ENCODE measurements at regions of chr4 and their contacts with region 1.

Region 1: GRCh38 chr4:140237606-140237986 is 83.6 kb upstream of the MAML3 start:
- DNase-seq: peak; percentile 89
- H3K4me3 ChIP-seq: no peak overlapping the region
- H3K27ac ChIP-seq: peak overlapping the region; percentile 30
- H3K4me1 ChIP-seq: peaks cover 34% of the 10 kb centered on the region
- H3K27me3 ChIP-seq: no peaks in the 10 kb centered on the region
- CTCF ChIP-seq: no peak
- POLR2A ChIP-seq: no peak

Region 2: DNA sequence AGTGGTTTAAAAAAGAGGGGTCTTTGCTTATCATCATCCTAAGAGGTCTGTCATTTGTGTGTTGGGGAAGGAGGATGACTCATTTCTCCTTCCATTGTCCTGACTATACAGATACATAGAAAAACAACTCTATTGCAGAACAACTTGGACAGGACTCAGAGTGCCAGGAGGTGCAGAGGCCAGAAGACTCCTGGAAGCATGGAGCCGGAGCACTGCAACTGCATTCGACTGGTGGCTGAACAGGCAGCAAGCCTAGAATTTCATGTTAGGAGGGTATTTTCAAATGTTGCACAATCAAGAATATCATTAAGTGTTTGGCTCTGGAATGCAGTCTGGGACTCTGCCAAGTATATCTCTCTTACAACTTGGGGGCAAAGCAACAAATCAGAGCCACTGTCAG is 48.6 kb before region 1 on chr4:
- CTCF ChIA-PET with region 1: interaction called, 7 read pairs
- POLR2A ChIA-PET with region 1: no interaction called
- dilution Hi-C with region 1: no loop called
- intact Hi-C with region 1: loop called (anchors 2 kb)
- DNase-seq: peak; percentile 82
- H3K4me3 ChIP-seq: no peak overlapping the region
- H3K27ac ChIP-seq: no peak overlapping the region
- H3K4me1 ChIP-seq: peaks cover 18% of the 10 kb centered on the region
- H3K27me3 ChIP-seq: no peaks in the 10 kb centered on the region
- CTCF ChIP-seq: no peak
- POLR2A ChIP-seq: no peak

Region 3: DNA sequence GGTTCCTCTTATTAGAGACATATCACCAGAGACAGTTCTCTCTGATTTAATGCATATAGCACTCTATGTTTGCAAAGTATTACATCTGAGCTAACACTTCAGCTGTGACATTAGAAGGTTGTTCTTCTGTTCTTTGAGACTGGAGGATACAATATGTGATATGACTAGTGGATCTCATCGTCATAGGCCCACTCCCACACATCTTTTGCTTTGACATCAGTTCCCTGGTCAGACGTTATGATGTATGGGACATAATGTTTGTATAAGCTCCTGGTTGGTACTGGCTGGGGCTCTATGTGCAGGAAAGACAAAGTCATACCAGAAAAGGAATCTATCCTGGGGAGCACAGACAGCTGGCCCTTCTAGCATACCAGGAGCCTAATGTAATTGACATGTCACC is 25.9 kb before region 1 on chr4:
- CTCF ChIA-PET with region 1: no interaction called
- POLR2A ChIA-PET with region 1: no interaction called
- dilution Hi-C with region 1: no loop called
- intact Hi-C with region 1: no loop called
- DNase-seq: no peak
- H3K4me3 ChIP-seq: no peak overlapping the region
- H3K27ac ChIP-seq: no peak overlapping the region
- H3K4me1 ChIP-seq: no peaks in the 10 kb centered on the region
- H3K27me3 ChIP-seq: peaks cover 0 to 1% of the 10 kb centered on the region in 2 experiments
- CTCF ChIP-seq: no peak
- POLR2A ChIP-seq: no peak

Region 4: DNA sequence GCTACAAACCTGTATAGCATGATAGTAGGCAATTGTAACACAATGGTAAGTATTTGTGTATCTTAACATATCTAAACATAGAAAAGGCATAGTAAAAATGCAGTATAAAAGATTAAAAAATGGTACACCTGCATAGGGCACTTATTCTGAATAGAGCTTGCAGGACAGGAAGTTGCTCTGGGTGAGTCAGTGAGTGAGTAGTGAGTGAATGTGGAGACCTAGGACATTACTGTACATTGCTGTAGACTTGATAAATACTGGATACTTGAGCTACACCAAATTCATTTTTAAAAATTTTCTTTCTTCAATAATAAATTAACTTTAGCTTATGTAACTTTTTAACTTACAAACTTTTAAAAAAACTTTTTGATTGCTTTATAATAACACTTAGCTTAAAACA is 15.4 kb before region 1 on chr4:
- CTCF ChIA-PET with region 1: interaction called, 11 read pairs
- POLR2A ChIA-PET with region 1: interaction called, 4 read pairs
- dilution Hi-C with region 1: no loop called
- intact Hi-C with region 1: no loop called
- DNase-seq: peak; percentile 66
- H3K4me3 ChIP-seq: no peak overlapping the region
- H3K27ac ChIP-seq: peak overlapping the region; percentile 65
- H3K4me1 ChIP-seq: peaks cover 19% of the 10 kb centered on the region
- H3K27me3 ChIP-seq: no peaks in the 10 kb centered on the region
- CTCF ChIP-seq: no peak
- POLR2A ChIP-seq: no peak

Region 5: GRCh38 chr4:140286456-140286855 is 48.9 kb after region 1 on chr4:
- CTCF ChIA-PET with region 1: no interaction called
- POLR2A ChIA-PET with region 1: no interaction called
- dilution Hi-C with region 1: no loop called
- intact Hi-C with region 1: no loop called
- DNase-seq: no peak
- H3K4me3 ChIP-seq: no peak overlapping the region
- H3K27ac ChIP-seq: no peak overlapping the region
- H3K4me1 ChIP-seq: no peaks in the 10 kb centered on the region
- H3K27me3 ChIP-seq: peaks cover 12 to 16% of the 10 kb centered on the region in 2 experiments
- CTCF ChIP-seq: no peak
- POLR2A ChIP-seq: no peak